Psoas muscle (tissue), 8 donors: ENCODE measurements at regions of chrX and their contacts with region 1.

Region 1: GRCh38 chrX:107000013-107000515 is at the start of gene MORC4:
- DNase-seq: peak; percentile 83 to 85
- ATAC-seq: peak; percentile 96 to 97 (median 97)
- H3K4me3 ChIP-seq: peak within 1 kb of the TSS; percentile 71
- H3K27ac ChIP-seq: peak within 1 kb of the TSS; percentile 68
- H3K4me1 ChIP-seq: no peaks in the 10 kb centered on the region
- H3K27me3 ChIP-seq: peaks cover 0 to 24% (median 0%) of the 10 kb centered on the region in 3 donors
- CTCF ChIP-seq: no peak
- total RNA-seq, gene MORC4: 7.9 to 17.1 (median 11.0) TPM

Region 2: DNA sequence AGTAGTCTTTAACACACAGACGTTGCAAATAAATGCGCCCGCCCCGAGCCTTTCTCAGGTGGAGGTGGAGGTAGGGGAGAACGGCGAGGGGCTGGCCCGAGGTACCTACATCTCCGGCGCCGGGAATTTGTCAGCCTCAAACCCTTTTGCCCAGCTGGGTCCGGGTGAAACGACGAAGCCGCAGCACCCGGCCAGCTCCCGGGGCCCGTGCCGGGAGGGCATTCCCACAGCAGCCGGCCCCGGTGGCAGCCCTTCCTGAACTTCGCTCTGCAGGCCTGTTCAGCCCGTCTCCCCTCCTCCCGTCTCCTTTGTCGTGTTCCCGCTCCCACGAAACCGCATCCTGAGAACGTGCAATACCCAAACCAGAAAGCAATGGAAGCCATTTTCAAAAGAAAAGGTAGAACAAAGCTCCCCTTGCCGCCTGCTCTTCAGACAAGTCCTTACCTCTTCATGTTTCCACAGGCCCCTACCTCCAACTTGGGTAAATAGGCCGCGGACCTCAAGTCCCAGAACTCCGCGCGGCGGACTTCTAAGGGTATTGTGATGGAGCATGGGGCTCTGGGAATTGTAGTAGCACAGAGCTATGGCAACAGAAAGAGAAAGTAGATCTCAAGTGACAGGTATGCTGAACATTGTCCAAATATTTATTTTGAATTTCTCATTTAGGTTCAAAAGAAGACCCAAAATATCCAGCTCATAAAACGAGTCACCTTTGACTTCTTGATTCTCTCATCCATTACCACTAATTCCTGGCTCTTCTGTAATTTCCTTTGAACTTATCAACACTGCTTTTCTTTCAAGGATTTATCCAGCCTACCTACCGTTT is 118.5 kb after region 1 on chrX and contains the start of gene RBM41:
- intact Hi-C with region 1: loop called in 1 of 2 experiments (anchors 5 kb)
- DNase-seq: peak; percentile 71 to 77
- ATAC-seq: peak; percentile 88 to 100 (median 98)
- H3K4me3 ChIP-seq: peak within 1 kb of the TSS; percentile 76
- H3K27ac ChIP-seq: peak within 1 kb of the TSS; percentile 58
- H3K4me1 ChIP-seq: no peaks in the 10 kb centered on the region
- H3K27me3 ChIP-seq: peaks cover 0 to 10% (median 0%) of the 10 kb centered on the region in 3 donors
- CTCF ChIP-seq: no peak
- total RNA-seq, gene RBM41: 10.4 to 14.6 (median 14.0) TPM